ENCODE measurements at regions of chr4 and their contacts with region 1.

Region 1: GRCh38 chr4:128220286-128221235 is 67.1 kb downstream of the PGRMC2 start:
- DNase-seq: no peak
- H3K4me3 Mint-ChIP-seq: no peak overlapping the region
- H3K27ac Mint-ChIP-seq: no peak overlapping the region
- H3K4me1 Mint-ChIP-seq: no peaks in the 10 kb centered on the region
- H3K27me3 Mint-ChIP-seq: no peaks in the 10 kb centered on the region
- CTCF ChIP-seq: no peak

Region 2: DNA sequence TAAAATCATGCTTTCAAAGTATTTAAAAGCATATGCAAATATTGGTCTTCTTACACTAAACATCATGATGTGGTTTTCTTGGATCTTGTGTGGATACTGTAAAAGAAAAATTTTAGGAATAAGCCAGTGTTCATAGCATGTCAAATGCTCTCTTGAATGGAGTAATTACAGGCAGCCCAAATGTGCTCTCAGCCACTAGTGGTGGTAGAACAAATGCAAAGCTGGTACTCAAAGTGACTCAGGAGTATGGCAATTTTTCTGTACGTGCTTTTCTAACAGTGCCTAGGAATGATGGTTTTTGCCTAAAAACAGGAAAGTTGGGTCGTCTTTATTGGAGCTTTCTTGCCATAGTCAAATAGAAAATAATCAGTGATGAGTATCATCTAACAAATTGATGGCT is 47.2 kb after region 1 on chr4:
- CTCF ChIA-PET with region 1: no interaction called
- intact Hi-C with region 1: loop called (anchors 5 kb)
- DNase-seq: no peak
- H3K4me3 Mint-ChIP-seq: peak overlapping the region; percentile 57
- H3K27ac Mint-ChIP-seq: peak overlapping the region; percentile 53
- H3K4me1 Mint-ChIP-seq: peaks cover 20% of the 10 kb centered on the region
- H3K27me3 Mint-ChIP-seq: no peaks in the 10 kb centered on the region
- CTCF ChIP-seq: no peak

Region 3: GRCh38 chr4:128287871-128288688 is 67.5 kb after region 1 on chr4:
- CTCF ChIA-PET with region 1: no interaction called
- intact Hi-C with region 1: loop called (anchors 2 kb)
- DNase-seq: peak; percentile 97
- H3K4me3 Mint-ChIP-seq: peak overlapping the region; percentile 78
- H3K27ac Mint-ChIP-seq: peak overlapping the region; percentile 89
- H3K4me1 Mint-ChIP-seq: peaks cover 15% of the 10 kb centered on the region
- H3K27me3 Mint-ChIP-seq: no peaks in the 10 kb centered on the region
- CTCF ChIP-seq: no peak

Region 4: DNA sequence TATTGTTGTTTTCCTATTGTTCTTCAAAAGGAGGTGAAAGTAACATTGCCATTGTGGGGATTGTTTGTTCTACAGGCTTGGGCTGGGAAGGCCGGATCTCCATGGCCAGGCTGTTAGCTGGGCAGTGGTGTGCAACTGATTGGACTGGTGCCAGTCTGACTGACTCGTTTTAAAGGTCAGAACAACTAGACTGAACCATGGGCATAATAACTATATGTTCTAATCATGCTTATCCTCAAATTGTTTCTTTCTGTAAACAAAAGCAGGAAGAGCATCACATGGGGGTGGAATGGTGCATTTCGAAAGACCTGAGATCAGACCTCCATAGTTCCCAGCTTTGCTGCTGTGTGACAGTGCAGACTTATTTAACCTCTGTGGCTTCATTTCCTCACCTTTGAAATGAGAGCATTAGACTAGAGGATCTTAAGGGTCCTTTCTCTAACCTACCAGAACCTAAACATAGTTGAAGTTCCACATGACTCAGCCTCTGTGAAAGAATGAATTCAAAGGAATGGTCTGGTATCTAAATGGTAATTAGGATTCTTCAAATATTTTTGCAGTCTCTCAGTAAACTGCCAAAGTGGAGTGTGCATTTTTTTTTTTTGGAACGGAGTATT is 133.8 kb after region 1 on chr4:
- CTCF ChIA-PET with region 1: no interaction called
- intact Hi-C with region 1: loop called (anchors 10 kb)
- DNase-seq: peak; percentile 34
- H3K4me3 Mint-ChIP-seq: no peak overlapping the region
- H3K27ac Mint-ChIP-seq: peak overlapping the region; percentile 50
- H3K4me1 Mint-ChIP-seq: peaks cover 14% of the 10 kb centered on the region
- H3K27me3 Mint-ChIP-seq: no peaks in the 10 kb centered on the region
- CTCF ChIP-seq: no peak

Measured in Calu3 (cell line).